Adrenal gland (tissue), 19 donors: ENCODE measurements at regions of chr18 and their contacts with region 1.

Region 1: GRCh38 chr18:56043671-56044070 is 455.7 kb upstream of the TCF4 start:
- DNase-seq: no peak
- H3K4me3 ChIP-seq: no peak overlapping the region
- H3K27ac ChIP-seq: no peak overlapping the region
- H3K4me1 ChIP-seq: no peaks in the 10 kb centered on the region
- H3K27me3 ChIP-seq: no peaks in the 10 kb centered on the region
- CTCF ChIP-seq: no peak
- POLR2A ChIP-seq: no peak

Region 2: GRCh38 chr18:55735199-55735855 is 308.3 kb before region 1 on chr18:
- intact Hi-C with region 1: no loop called
- DNase-seq: no peak
- H3K4me3 ChIP-seq: no peak overlapping the region
- H3K27ac ChIP-seq: no peak overlapping the region
- H3K4me1 ChIP-seq: no peaks in the 10 kb centered on the region
- H3K27me3 ChIP-seq: no peaks in the 10 kb centered on the region
- CTCF ChIP-seq: no peak
- POLR2A ChIP-seq: no peak

Region 3: GRCh38 chr18:55988537-55988936 is 55.1 kb before region 1 on chr18:
- intact Hi-C with region 1: loop called in 1 of 2 experiments (anchors 5 kb)
- DNase-seq: peak in 1 of 7 donors; percentile 11
- H3K4me3 ChIP-seq: no peak overlapping the region
- H3K27ac ChIP-seq: peak overlapping the region in 1 of 5 donors; percentile 40
- H3K4me1 ChIP-seq: no peaks in the 10 kb centered on the region
- H3K27me3 ChIP-seq: no peaks in the 10 kb centered on the region
- CTCF ChIP-seq: no peak
- POLR2A ChIP-seq: no peak